GM23248 (cell line): ENCODE measurements at regions of chr16 and their contacts with region 1.

Region 1: DNA sequence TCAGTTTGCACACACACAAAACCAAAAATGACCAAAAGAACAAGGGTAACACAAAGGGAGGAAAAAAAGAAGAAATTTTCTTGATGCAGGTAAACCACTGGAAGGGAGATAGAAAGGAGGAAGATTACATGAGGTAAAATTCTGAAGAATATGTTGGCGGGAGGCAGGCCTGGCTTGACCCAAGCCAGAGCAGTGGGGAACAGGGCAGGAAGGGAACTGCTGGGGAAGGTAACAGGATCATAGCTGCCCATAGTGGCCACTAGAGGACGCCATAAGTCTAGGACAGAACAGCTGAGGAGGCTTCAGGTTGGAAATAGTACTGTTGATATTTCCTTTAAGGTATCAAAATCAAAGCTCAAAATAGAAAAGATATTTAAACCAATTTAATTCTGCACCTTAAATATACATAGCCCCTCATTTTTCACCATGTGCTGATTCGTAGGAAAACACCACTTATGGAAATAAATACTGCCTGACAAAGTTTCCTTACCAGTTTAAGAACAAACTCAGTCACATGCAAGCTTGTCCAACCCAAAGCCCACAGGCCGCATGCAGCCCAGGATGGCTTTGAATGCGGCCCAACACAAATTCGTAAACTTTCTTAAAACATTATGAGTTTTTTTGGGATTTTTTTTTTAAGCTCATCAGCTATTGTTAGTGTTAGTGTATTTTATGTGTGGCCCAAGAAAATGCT is 15.5 kb downstream of the VPS35 start:
- DNase-seq: peak; percentile 74
- H3K4me3 ChIP-seq: no peak overlapping the region
- H3K27ac ChIP-seq: no peak overlapping the region
- H3K4me1 ChIP-seq: no peaks in the 10 kb centered on the region
- H3K27me3 ChIP-seq: no peaks in the 10 kb centered on the region

Region 2: GRCh38 chr16:46774743-46775177 is 101.3 kb after region 1 on chr16:
- in situ Hi-C with region 1: no loop called
- DNase-seq: no peak
- H3K4me3 ChIP-seq: no peak overlapping the region
- H3K27ac ChIP-seq: no peak overlapping the region
- H3K4me1 ChIP-seq: no peaks in the 10 kb centered on the region
- H3K27me3 ChIP-seq: no peaks in the 10 kb centered on the region

Region 3: GRCh38 chr16:46918861-46919792 is 245.7 kb after region 1 on chr16:
- in situ Hi-C with region 1: loop called (anchors 10 kb)
- DNase-seq: no peak
- H3K4me3 ChIP-seq: no peak overlapping the region
- H3K27ac ChIP-seq: no peak overlapping the region
- H3K4me1 ChIP-seq: no peaks in the 10 kb centered on the region
- H3K27me3 ChIP-seq: no peaks in the 10 kb centered on the region